RWPE1 (cell line): ENCODE measurements at regions of chr11 and their contacts with region 1.

Region 1: DNA sequence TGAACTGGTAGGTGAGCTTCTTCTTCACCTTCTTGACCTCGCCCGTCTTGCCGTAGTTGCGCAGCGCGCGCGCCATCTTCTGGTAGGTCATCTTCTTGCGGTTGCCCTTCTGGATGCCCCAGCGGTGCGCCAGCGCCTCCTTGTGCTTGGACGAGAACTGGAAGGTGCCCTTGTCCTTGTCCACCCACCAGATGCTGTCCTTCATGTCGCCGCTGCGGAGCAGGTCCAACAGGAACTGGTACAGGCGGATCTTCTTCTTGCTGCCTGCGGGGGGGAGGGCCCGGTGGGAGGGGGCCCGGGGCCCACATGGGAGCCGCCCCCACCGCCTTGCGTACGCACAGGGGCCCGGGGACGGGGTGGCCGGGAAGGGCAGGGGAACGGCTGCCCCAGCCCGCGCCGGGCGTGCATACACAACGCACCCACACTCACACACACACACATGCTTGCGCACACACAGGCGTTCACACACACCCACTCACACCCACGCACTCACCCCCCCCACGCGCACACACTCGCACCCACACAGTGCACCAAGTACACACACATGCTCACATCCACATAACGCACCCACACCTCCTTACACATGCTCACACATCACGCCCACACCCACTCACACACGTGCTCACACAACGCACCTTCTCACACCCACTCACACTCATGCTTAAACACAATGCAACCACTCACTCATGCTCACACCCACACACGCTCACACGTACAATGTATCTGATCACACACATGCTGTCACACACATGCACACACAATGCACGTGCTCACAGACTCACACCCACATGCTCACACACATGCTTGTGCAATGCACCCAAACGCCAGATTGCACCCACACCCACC is 3.0 kb upstream of the MYBPC3 start:
- DNase-seq: peak; percentile 76
- H3K27ac ChIP-seq: peak overlapping the region; percentile 59
- CTCF ChIP-seq: peak; percentile 97

Region 2: GRCh38 chr11:47233989-47234668 is 121.4 kb before region 1 on chr11:
- CTCF ChIA-PET with region 1: interaction called, 10 read pairs
- POLR2A ChIA-PET with region 1: no interaction called
- DNase-seq: no peak
- H3K27ac ChIP-seq: peak overlapping the region; percentile 55
- CTCF ChIP-seq: no peak

Region 3: GRCh38 chr11:47248664-47249377 is 106.7 kb before region 1 on chr11 and contains the start of gene ACP2:
- CTCF ChIA-PET with region 1: no interaction called
- POLR2A ChIA-PET with region 1: interaction called, 12 read pairs
- DNase-seq: peak; percentile 83
- H3K27ac ChIP-seq: peak within 1 kb of the TSS; percentile 80
- CTCF ChIP-seq: peak; percentile 39

Region 4: GRCh38 chr11:47366020-47366490 is 10.5 kb after region 1 on chr11:
- CTCF ChIA-PET with region 1: interaction called, 12 read pairs
- POLR2A ChIA-PET with region 1: no interaction called
- DNase-seq: no peak
- H3K27ac ChIP-seq: no peak overlapping the region
- CTCF ChIP-seq: no peak